ENCODE measurements at regions of chr16 and their contacts with region 1.

Region 1: DNA sequence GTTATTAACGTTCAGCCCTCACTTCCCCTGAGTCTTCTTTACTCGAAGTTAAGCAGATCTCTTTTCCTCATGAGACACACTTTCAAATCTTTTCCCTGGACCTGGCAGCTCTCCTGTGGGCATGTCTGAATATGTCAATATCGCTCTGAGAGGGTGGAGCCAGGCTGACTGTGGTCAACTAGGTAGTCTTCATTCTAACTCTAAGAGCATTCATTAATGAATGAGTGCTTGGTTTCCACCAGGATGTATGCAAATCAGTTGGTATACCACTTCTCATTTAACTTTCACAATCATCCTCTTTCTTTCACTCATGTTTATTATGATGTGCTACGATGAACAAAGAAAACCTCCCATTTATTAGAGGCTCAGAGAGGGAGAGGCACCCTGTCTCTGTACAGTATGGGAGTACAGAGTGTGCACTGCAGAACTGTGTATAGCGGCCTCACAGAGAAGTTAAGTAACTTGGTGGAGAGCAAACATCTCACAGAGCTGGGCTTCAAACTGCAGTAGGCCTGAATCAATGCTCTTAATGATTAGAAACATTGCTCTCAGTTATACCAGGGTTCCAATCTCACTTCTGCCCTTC is 39.9 kb downstream of the OTOA start:
- DNase-seq: no peak
- H3K4me3 ChIP-seq: no peak overlapping the region
- H3K27ac ChIP-seq: no peak overlapping the region
- H3K4me1 ChIP-seq: no peaks in the 10 kb centered on the region
- H3K27me3 ChIP-seq: no peaks in the 10 kb centered on the region

Region 2: GRCh38 chr16:21656795-21657768 is 46.6 kb before region 1 on chr16:
- in situ Hi-C with region 1: loop called (anchors 5 kb)
- DNase-seq: peak; percentile 76
- H3K4me3 ChIP-seq: no peak overlapping the region
- H3K27ac ChIP-seq: no peak overlapping the region
- H3K4me1 ChIP-seq: 0 out of 2 replicates have a peak, but pooled peaks cover 6% of the 10 kb centered on the region
- H3K27me3 ChIP-seq: no peaks in the 10 kb centered on the region

Measured in GM23248 (cell line).